ENCODE measurements at regions of chr2 and their contacts with region 1.

Region 1: GRCh38 chr2:209334198-209335017 is 89.4 kb upstream of the MAP2 start:
- DNase-seq: peak; percentile 37
- ATAC-seq: peak; percentile 73; the same call in 1 of the 2 replicates
- H3K4me3 ChIP-seq: no peak overlapping the region
- H3K27ac ChIP-seq: no peak overlapping the region
- H3K4me1 ChIP-seq: no peaks in the 10 kb centered on the region
- H3K27me3 ChIP-seq: no peaks in the 10 kb centered on the region
- CTCF ChIP-seq: peak; percentile 86
- POLR2A ChIP-seq: no peak
- RAD21 ChIP-seq: peak; percentile 88

Region 2: GRCh38 chr2:209423562-209424198 is 89.3 kb after region 1 on chr2 and contains the start of gene MAP2:
- CTCF ChIA-PET with region 1: interaction called, 10 read pairs
- POLR2A ChIA-PET with region 1: no interaction called
- dilution Hi-C with region 1: no loop called
- in situ Hi-C with region 1: no loop called
- intact Hi-C with region 1: loop called (anchors 2 kb)
- DNase-seq: peak; percentile 60
- ATAC-seq: peak; percentile 99
- H3K4me3 ChIP-seq: peak within 1 kb of the TSS; percentile 43
- H3K27ac ChIP-seq: no peak within 1 kb of the TSS
- H3K4me1 ChIP-seq: peaks cover 3% of the 10 kb centered on the region; the same call in 1 of the 2 replicates
- H3K27me3 ChIP-seq: no peaks in the 10 kb centered on the region
- CTCF ChIP-seq: peak; percentile 99
- POLR2A ChIP-seq: no peak
- RAD21 ChIP-seq: peak; percentile 58
- total RNA-seq, gene MAP2: 0.28 and 0.36 TPM in 2 replicates

Region 3: DNA sequence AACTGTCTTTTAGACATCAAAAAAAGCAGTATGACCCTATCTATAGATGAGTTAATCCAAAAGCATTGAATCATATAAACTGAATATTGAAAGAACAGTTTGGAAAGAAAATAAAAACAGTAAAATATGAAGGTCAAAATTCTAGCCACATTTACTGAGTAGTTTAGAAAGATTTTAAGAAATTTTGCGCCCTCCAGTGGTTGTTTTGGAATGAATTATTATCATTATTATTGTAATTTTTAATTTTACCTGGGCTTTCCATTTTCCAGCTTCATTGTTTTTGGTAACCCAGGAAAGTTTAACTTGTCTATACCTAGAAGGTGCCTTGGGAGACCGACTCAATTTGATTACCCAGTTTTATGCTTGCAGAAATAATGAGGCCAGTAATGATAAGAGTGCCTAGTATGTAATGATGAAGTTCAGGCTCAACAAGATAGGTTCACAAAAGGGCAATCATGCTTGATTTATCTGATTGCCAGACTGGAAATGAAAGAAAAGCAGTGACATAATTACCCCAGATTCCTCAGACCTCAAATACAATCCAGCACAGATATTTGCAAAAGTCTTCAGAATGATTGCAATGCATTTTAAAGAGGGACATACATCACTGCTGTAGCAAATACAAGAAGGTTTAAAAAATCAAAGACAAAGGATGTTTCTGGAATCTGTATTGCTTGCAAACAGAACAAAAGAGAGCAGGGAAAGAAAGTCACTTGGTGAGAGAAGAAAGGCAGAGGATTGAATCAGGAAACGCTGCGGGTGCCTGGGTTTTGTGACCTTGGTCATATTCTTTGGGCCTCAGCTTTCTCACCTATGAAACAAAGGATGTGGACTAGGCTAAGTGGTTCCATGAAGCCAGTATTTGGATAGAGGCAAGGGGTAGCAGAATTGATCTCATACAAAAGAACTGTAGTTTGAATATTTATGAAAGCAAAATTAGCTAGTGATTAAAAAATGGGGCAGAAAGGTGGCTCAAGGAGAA is 243.3 kb after region 1 on chr2:
- CTCF ChIA-PET with region 1: interaction called, 12 read pairs
- POLR2A ChIA-PET with region 1: no interaction called
- dilution Hi-C with region 1: no loop called
- in situ Hi-C with region 1: loop called (anchors 10 kb)
- intact Hi-C with region 1: loop called (anchors 1 kb)
- DNase-seq: peak; percentile 6
- ATAC-seq: no peak
- H3K4me3 ChIP-seq: no peak overlapping the region
- H3K27ac ChIP-seq: no peak overlapping the region
- H3K4me1 ChIP-seq: no peaks in the 10 kb centered on the region
- H3K27me3 ChIP-seq: no peaks in the 10 kb centered on the region
- CTCF ChIP-seq: peak; percentile 52
- POLR2A ChIP-seq: no peak
- RAD21 ChIP-seq: peak; percentile 27; the same call in 1 of the 2 replicates

Region 4: DNA sequence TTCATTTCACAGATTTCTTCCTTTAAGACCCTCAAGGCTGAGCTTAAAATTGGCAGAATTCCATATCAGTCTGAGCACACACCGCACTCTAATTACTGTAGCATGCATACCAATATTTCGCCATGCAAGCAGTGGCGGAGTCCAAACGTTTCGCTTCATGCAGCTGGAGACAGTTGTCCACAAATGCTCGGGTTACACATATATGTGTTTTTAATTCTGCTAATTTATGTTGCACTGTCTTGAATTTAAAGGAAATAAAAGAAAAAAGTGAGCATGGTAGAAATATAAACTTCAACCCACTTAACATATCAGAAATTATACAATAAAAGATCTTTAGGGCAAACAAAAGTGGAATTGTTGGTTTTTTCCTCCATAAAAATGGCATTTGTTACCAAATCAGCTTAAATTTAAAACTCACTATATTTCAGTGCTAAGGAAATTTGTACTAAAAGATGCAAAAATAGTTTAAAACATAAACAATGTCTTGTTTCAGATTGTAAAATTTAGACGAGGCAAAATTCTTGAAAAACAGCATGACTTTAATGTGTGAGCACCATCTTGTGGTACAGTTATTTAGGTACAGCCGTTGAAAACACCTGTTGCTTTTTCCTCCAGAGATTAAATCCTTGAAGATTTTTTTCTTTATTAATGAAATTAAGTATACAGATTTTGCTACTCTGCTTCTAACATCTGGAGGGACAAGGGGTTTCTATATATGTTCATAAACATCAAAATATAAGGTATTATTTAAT is 860.9 kb after region 1 on chr2:
- CTCF ChIA-PET with region 1: interaction called, 3 read pairs
- POLR2A ChIA-PET with region 1: no interaction called
- dilution Hi-C with region 1: no loop called
- in situ Hi-C with region 1: loop called (anchors 25 kb)
- intact Hi-C with region 1: loop called (anchors 5 kb)
- DNase-seq: peak; percentile 58
- ATAC-seq: no peak
- H3K4me3 ChIP-seq: peak overlapping the region; percentile 42; the same call in 1 of the 2 replicates
- H3K27ac ChIP-seq: no peak overlapping the region
- H3K4me1 ChIP-seq: no peaks in the 10 kb centered on the region
- H3K27me3 ChIP-seq: no peaks in the 10 kb centered on the region
- CTCF ChIP-seq: peak; percentile 81
- POLR2A ChIP-seq: no peak
- RAD21 ChIP-seq: peak; percentile 77